ENCODE measurements at regions of chr7 and their contacts with region 1.

Region 1: DNA sequence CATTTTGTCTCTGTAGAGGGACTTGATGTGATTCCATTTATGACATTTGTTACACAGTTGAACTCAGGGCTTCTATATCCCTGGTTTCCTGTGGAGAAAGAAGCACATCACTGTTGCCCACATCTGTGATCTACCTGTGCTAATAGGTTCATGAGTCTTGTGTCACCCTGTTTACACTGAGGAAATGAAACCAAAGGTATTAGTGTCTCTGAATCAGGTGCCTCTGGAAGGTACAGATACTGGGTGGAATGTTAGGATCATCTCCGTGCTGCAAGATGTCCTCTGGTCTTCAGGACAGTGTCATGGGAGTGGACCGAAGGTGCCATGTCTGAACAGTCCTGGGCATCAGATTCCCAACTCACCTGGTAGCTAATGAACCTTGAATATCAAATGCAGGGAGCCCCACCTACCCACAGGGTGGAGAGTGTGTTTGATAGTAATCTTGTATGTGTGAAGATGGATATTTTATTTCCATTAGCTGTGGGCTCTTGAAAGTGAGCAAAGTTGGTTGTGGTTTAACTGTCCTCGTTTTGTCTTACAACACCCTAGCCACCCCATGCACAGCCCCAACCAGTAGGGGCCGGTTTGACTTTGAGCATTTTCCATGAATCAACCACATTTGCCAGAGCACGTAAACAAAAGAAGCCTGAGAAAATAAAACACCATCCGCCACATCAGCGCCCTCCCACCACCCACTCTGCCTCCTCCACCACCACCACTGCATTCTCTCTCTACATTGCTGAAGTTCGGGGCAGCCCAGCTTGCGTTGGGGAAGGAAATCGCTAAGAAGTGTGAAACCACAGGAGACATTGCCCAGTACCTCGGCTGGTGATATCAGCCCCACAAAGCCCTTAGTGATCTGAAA is 40.7 kb downstream of the TARP start:
- DNase-seq: peak; percentile 82
- H3K4me3 Mint-ChIP-seq: peak overlapping the region; percentile 64
- H3K27ac Mint-ChIP-seq: peak overlapping the region; percentile 91
- H3K4me1 Mint-ChIP-seq: peaks cover 82% of the 10 kb centered on the region
- H3K27me3 Mint-ChIP-seq: no peaks in the 10 kb centered on the region

Region 2: GRCh38 chr7:38178004-38178694 is 54.6 kb before region 1 on chr7 and contains the start of gene STARD3NL:
- intact Hi-C with region 1: loop called (anchors 1 kb)
- DNase-seq: peak; percentile 87
- H3K4me3 Mint-ChIP-seq: peak within 1 kb of the TSS; percentile 95
- H3K27ac Mint-ChIP-seq: peak within 1 kb of the TSS; percentile 89
- H3K4me1 Mint-ChIP-seq: peaks cover 36% of the 10 kb centered on the region
- H3K27me3 Mint-ChIP-seq: no peaks in the 10 kb centered on the region
- total RNA-seq, gene STARD3NL: 39.2 and 42.4 TPM in 2 replicates

Region 3: GRCh38 chr7:38222481-38223096 is 10.1 kb before region 1 on chr7:
- intact Hi-C with region 1: loop called (anchors 1 kb)
- DNase-seq: no peak
- H3K4me3 Mint-ChIP-seq: no peak overlapping the region
- H3K27ac Mint-ChIP-seq: no peak overlapping the region
- H3K4me1 Mint-ChIP-seq: peaks cover 35% of the 10 kb centered on the region
- H3K27me3 Mint-ChIP-seq: no peaks in the 10 kb centered on the region

Region 4: GRCh38 chr7:38335492-38336147 is 102.9 kb after region 1 on chr7:
- intact Hi-C with region 1: loop called (anchors 2 kb)
- DNase-seq: peak; percentile 71
- H3K4me3 Mint-ChIP-seq: peak overlapping the region; percentile 72
- H3K27ac Mint-ChIP-seq: peak overlapping the region; percentile 65
- H3K4me1 Mint-ChIP-seq: peaks cover 42% of the 10 kb centered on the region
- H3K27me3 Mint-ChIP-seq: no peaks in the 10 kb centered on the region

Region 5: DNA sequence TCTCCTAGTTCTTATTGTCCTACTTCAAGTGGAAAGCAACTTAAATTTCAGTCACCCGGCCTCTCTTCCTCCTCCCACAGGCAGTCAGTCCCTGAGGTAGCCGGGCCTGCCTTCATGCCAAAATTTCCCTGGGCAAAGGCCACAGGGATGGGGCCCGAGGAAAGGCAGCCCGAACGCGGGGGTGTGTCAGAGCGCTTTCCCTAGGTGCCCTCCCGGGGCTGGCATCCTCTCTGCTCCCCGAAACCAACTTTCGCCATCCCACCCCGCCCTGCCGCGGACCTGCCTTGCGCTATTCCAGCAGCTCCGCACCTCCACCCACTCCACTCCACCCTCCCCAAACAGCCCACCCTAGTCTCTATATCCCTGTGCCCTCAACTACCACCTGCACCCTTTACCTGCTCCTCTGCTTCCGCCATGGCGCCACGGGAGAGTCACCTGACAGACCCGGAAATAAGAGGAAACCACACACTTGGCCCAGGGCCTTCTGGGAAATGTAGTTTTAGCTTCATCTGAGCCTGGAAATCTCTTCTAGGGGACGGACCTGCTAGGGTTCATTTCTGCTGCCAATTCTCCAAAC is 676.1 kb after region 1 on chr7 and contains the start of gene VPS41:
- intact Hi-C with region 1: loop called (anchors 5 kb)
- DNase-seq: peak; percentile 72
- H3K4me3 Mint-ChIP-seq: peak within 1 kb of the TSS; percentile 92
- H3K27ac Mint-ChIP-seq: peak within 1 kb of the TSS; percentile 90
- H3K4me1 Mint-ChIP-seq: peaks cover 32% of the 10 kb centered on the region
- H3K27me3 Mint-ChIP-seq: peaks cover 8% of the 10 kb centered on the region
- total RNA-seq, gene VPS41: 59.9 and 63.6 TPM in 2 replicates